GM13977 (cell line): ENCODE measurements at regions of chr13 and their contacts with region 1.

Region 1: DNA sequence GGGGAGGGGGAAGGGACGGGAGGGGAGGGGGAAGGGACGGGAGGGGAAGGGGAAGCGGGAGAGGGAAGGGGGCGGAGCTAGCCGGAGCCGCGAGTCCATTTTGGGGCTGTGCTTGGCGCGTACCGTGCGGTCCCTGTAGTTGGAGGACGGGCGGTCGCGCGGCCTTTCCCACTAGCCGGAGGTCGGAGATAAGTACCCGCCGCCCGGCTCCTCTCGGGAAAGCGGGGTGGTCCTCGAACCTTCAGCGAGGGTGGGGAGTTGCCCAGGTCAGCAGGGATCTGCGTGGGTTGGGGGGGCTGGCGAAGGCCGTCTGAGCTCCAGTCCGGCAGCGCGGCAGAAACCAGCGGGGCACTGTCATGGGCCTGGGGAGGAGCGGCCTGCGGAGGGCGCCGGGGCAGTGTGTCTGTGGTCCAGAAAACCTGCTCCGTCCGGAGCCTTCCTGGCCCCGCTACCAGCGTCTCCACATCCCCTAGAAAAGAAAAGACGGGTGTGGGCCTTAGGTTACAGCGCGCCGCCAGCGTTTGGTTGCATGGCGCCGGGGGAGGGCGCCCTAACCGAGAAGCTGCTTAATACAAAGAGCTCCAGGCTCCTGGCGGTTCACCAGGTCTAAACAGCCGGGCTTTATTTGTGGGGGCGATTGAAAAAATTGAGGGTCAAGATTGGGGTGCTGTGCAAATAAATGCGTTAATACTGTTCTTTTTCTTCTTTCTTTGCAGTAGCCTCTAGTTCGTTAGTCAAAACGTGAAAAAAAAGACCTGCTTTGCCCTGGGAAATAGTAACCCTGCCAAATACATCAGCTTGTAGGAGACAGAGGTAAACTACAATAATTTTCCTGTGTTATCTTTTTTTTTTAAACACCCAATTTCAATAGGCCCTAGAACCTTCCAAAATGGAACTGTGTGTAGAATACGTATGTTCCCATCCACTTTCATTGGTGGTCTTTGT is at the start of gene TRIM13:
- DNase-seq: peak; percentile 87
- CTCF ChIP-seq: peak; percentile 87

Region 2: DNA sequence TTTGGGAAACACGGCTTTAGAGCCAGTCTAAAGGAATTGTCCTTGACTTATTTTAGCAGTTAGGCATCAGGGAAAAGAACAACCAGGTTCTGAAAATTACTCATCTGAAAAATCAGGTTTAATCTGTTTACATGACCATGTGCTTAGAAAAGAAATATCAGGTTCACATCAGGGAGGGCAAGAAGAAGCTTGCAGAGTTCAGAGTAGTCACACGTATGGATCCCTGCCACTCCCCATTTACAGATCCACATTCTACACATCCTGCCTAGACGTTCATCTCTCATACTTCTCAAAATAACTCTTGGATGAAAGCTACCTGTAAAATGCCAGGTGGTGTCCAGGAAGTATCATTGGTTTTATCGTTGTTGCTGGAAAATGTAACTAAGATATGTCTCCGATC is 515.4 kb before region 1 on chr13:
- in situ Hi-C with region 1: no loop called
- DNase-seq: no peak
- CTCF ChIP-seq: no peak

Region 3: DNA sequence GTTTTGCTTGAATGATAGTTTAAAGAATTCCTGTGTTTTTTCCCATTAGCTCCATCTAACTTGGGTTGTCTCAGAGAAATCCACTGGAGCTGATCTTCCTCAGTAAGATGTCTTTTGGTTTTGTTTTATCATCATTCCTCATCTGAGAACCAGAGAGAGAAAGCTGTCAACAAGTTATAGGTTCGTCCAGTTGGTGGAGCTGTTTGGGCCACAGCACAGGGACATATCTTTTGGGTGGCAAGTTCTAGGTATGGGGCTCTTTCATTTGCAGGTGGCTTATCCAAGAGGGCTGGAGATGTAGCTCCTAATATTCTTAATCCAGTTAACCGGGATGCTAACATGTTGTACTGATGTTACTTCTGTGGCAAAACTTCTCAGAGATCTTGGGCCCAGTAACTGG is 192.2 kb after region 1 on chr13:
- in situ Hi-C with region 1: no loop called
- DNase-seq: no peak
- CTCF ChIP-seq: peak; percentile 28

Region 4: GRCh38 chr13:50529154-50529882 is 532.1 kb after region 1 on chr13:
- in situ Hi-C with region 1: loop called (anchors 25 kb)
- DNase-seq: no peak
- CTCF ChIP-seq: no peak

Region 5: DNA sequence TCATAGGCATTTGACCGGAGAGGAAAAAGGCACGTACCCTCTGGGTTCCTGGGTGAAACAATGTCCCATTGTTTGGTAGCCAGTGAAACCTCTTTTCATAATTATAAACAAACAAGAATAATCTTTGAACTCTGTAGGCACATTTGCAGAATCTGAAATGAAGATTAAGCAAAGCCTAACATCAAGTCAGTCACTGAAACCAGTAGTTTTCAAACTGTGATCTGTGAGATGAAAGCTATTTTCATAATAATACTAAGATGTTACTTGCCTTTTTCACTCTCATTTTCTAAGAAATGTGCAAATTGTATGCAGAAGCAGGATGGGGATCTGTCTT is 1692.4 kb after region 1 on chr13:
- in situ Hi-C with region 1: no loop called
- DNase-seq: no peak
- CTCF ChIP-seq: no peak